ENCODE measurements at regions of chr13 and their contacts with region 1.

Region 1: GRCh38 chr13:75537401-75538365 is at the start of gene COMMD6:
- DNase-seq: peak; percentile 80
- H3K4me3 ChIP-seq: peak within 1 kb of the TSS; percentile 56
- H3K27ac ChIP-seq: peak within 1 kb of the TSS; percentile 49
- H3K4me1 ChIP-seq: peaks cover 7% of the 10 kb centered on the region
- H3K27me3 ChIP-seq: no peaks in the 10 kb centered on the region
- CTCF ChIP-seq: peak; percentile 56
- total RNA-seq, gene COMMD6: 118 to 157 TPM

Region 2: DNA sequence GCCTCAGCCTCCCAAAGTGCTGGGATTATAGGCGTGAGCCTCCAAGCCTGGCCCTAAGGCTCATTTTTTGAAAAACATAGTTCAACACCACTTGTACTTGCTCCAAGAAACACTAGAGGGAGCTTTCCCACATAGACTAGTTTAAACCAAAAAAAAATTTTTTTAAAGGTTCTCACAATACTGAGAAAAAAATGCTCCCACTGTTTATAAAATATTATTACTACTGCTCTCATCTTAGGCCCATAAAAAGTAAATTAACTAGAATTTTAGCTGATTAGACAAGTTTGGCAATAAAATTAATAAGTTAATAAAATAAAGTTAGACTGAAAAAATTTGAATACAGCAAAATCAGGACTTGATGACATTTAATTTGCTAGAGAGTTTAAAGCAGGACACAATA is 165.2 kb before region 1 on chr13:
- intact Hi-C with region 1: loop called (anchors 5 kb)
- DNase-seq: peak; percentile 32
- H3K4me3 ChIP-seq: no peak overlapping the region
- H3K27ac ChIP-seq: no peak overlapping the region
- H3K4me1 ChIP-seq: no peaks in the 10 kb centered on the region
- H3K27me3 ChIP-seq: no peaks in the 10 kb centered on the region
- CTCF ChIP-seq: peak; percentile 70

Region 3: GRCh38 chr13:75482070-75482819 is 55.4 kb before region 1 on chr13 and contains the start of gene TBC1D4:
- intact Hi-C with region 1: loop called (anchors 5 kb)
- DNase-seq: peak; percentile 89
- H3K4me3 ChIP-seq: peak within 1 kb of the TSS; percentile 84
- H3K27ac ChIP-seq: peak within 1 kb of the TSS; percentile 89
- H3K4me1 ChIP-seq: no peaks in the 10 kb centered on the region
- H3K27me3 ChIP-seq: no peaks in the 10 kb centered on the region
- CTCF ChIP-seq: peak; percentile 77
- total RNA-seq, gene TBC1D4: 16.7 to 27.9 TPM

Region 4: GRCh38 chr13:75749407-75749806 is 211.7 kb after region 1 on chr13:
- intact Hi-C with region 1: no loop called
- DNase-seq: no peak
- H3K4me3 ChIP-seq: no peak overlapping the region
- H3K27ac ChIP-seq: no peak overlapping the region
- H3K4me1 ChIP-seq: no peaks in the 10 kb centered on the region
- H3K27me3 ChIP-seq: no peaks in the 10 kb centered on the region
- CTCF ChIP-seq: no peak

Measured in colonic mucosa (tissue), 4 donors.